ENCODE measurements at regions of chr16 and their contacts with region 1.

Region 1: GRCh38 chr16:527006-527753 is at the start of gene CAPN15:
- DNase-seq: peak; percentile 91
- ATAC-seq: peak; percentile 71
- H3K4me3 Mint-ChIP-seq: peak within 1 kb of the TSS; percentile 94
- H3K27ac Mint-ChIP-seq: peak within 1 kb of the TSS; percentile 96
- H3K4me1 Mint-ChIP-seq: peaks cover 35% of the 10 kb centered on the region
- H3K27me3 Mint-ChIP-seq: no peaks in the 10 kb centered on the region
- total RNA-seq, gene CAPN15: 64.7 to 69.7 TPM

Region 2: GRCh38 chr16:228818-229730 is 298.1 kb before region 1 on chr16 and contains the start of gene LUC7L:
- CTCF ChIA-PET with region 1: no interaction called
- POLR2A ChIA-PET with region 1: no interaction called
- intact Hi-C with region 1: loop called (anchors 1 to 5 kb)
- DNase-seq: peak; percentile 93
- ATAC-seq: peak; percentile 90
- H3K4me3 Mint-ChIP-seq: peak within 1 kb of the TSS; percentile 92
- H3K27ac Mint-ChIP-seq: peak within 1 kb of the TSS; percentile 85
- H3K4me1 Mint-ChIP-seq: peaks cover 30% of the 10 kb centered on the region
- H3K27me3 Mint-ChIP-seq: no peaks in the 10 kb centered on the region
- total RNA-seq, gene LUC7L: 44.6 to 50.1 TPM

Region 3: GRCh38 chr16:370443-370842 is 156.7 kb before region 1 on chr16 and contains the start of gene MRPL28:
- CTCF ChIA-PET with region 1: no interaction called
- POLR2A ChIA-PET with region 1: no interaction called
- intact Hi-C with region 1: loop called in 1 of 2 experiments (anchors 1 kb)
- DNase-seq: peak; percentile 97
- ATAC-seq: peak; percentile 100
- H3K4me3 Mint-ChIP-seq: peak within 1 kb of the TSS; percentile 78
- H3K27ac Mint-ChIP-seq: peak within 1 kb of the TSS; percentile 92
- H3K4me1 Mint-ChIP-seq: peaks cover 17% of the 10 kb centered on the region
- H3K27me3 Mint-ChIP-seq: no peaks in the 10 kb centered on the region
- total RNA-seq, gene MRPL28: 90.2 to 94.4 TPM

Region 4: GRCh38 chr16:425082-425718 is 102.0 kb before region 1 on chr16 and contains the start of gene RAB11FIP3:
- CTCF ChIA-PET with region 1: interaction called, 3 read pairs
- POLR2A ChIA-PET with region 1: no interaction called
- intact Hi-C with region 1: loop called in 1 of 2 experiments (anchors 1 kb)
- DNase-seq: peak; percentile 90
- ATAC-seq: peak; percentile 93
- H3K4me3 Mint-ChIP-seq: peak within 1 kb of the TSS; percentile 74
- H3K27ac Mint-ChIP-seq: peak within 1 kb of the TSS; percentile 47
- H3K4me1 Mint-ChIP-seq: peaks cover 30% of the 10 kb centered on the region
- H3K27me3 Mint-ChIP-seq: peaks cover 5% of the 10 kb centered on the region
- total RNA-seq, gene RAB11FIP3: 14.2 to 17.0 TPM

Region 5: GRCh38 chr16:648781-649589 is 121.8 kb after region 1 on chr16 and contains the start of gene WDR90:
- CTCF ChIA-PET with region 1: no interaction called
- POLR2A ChIA-PET with region 1: no interaction called
- intact Hi-C with region 1: loop called in 1 of 2 experiments (anchors 1 kb)
- DNase-seq: peak; percentile 96
- ATAC-seq: peak; percentile 92
- H3K4me3 Mint-ChIP-seq: peak within 1 kb of the TSS; percentile 81
- H3K27ac Mint-ChIP-seq: peak within 1 kb of the TSS; percentile 73
- H3K4me1 Mint-ChIP-seq: peaks cover 15% of the 10 kb centered on the region
- H3K27me3 Mint-ChIP-seq: no peaks in the 10 kb centered on the region
- total RNA-seq, gene WDR90: 43.6 to 55.9 TPM

Region 6: DNA sequence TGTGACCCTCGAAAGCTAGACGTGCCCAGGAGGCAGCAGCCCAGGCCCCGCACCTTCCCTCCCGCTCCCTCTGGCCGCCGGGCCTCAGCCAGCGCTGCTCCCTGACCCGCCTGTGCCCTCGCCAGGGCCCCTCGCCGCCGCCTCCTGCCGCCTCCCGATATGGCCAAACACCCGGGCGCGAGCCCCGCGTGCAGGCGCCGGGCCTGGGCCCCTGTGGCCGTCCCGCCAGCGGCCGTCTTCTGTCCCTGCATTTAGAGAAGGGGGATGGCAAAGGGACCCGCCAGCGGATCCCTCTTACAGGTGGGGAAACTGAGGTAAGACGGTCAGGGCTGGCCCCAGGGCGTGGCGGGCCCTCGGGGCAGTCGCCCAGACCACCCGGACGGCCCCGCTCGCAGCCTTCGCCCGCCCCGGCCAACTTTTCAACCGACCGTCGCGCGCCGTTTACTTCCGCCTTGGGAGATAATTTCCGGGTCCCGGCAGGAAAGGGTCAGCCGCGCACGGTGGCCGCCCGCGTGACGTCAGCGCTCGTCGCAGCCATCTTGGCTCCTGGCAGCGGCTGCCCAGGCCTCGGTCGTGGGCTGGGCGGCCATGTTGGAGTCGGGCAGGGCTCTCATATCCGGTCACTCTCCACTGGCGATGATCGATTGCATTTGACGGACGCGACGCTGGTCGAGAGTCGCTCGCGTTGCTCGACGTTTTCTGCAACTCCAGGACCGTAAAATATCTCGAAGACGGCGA is 280.3 kb after region 1 on chr16:
- CTCF ChIA-PET with region 1: no interaction called
- POLR2A ChIA-PET with region 1: no interaction called
- intact Hi-C with region 1: loop called in 1 of 2 experiments (anchors 5 kb)
- DNase-seq: peak; percentile 93
- ATAC-seq: peak; percentile 98
- H3K4me3 Mint-ChIP-seq: peak overlapping the region; percentile 96
- H3K27ac Mint-ChIP-seq: peak overlapping the region; percentile 95
- H3K4me1 Mint-ChIP-seq: peaks cover 8% of the 10 kb centered on the region
- H3K27me3 Mint-ChIP-seq: peaks cover 4% of the 10 kb centered on the region